ENCODE measurements at regions of chr2 and their contacts with region 1.

Region 1: GRCh38 chr2:30711646-30712085 is 95.6 kb downstream of the CAPN13 start:
- DNase-seq: peak; percentile 79 to 92 (median 87)
- ATAC-seq: peak; percentile 70 to 72
- H3K4me3 ChIP-seq: no peak overlapping the region
- H3K27ac ChIP-seq: no peak overlapping the region
- H3K4me1 ChIP-seq: no peaks in the 10 kb centered on the region
- H3K27me3 ChIP-seq: no peaks in the 10 kb centered on the region

Region 2: GRCh38 chr2:30178618-30179434 is 532.8 kb before region 1 on chr2:
- intact Hi-C with region 1: loop called in 1 of 4 experiments (anchors 10 kb)
- DNase-seq: peak in 2 of 3 donors; percentile 42 to 69
- ATAC-seq: peak; percentile 71 to 90
- H3K4me3 ChIP-seq: no peak overlapping the region
- H3K27ac ChIP-seq: peak overlapping the region; percentile 63
- H3K4me1 ChIP-seq: peaks cover 10% of the 10 kb centered on the region
- H3K27me3 ChIP-seq: no peaks in the 10 kb centered on the region

Region 3: GRCh38 chr2:30336978-30337841 is 374.5 kb before region 1 on chr2:
- intact Hi-C with region 1: loop called in 1 of 4 experiments (anchors 10 kb)
- DNase-seq: no peak
- ATAC-seq: no peak
- H3K4me3 ChIP-seq: no peak overlapping the region
- H3K27ac ChIP-seq: peak overlapping the region; percentile 7
- H3K4me1 ChIP-seq: peaks cover 13% of the 10 kb centered on the region
- H3K27me3 ChIP-seq: no peaks in the 10 kb centered on the region

Region 4: DNA sequence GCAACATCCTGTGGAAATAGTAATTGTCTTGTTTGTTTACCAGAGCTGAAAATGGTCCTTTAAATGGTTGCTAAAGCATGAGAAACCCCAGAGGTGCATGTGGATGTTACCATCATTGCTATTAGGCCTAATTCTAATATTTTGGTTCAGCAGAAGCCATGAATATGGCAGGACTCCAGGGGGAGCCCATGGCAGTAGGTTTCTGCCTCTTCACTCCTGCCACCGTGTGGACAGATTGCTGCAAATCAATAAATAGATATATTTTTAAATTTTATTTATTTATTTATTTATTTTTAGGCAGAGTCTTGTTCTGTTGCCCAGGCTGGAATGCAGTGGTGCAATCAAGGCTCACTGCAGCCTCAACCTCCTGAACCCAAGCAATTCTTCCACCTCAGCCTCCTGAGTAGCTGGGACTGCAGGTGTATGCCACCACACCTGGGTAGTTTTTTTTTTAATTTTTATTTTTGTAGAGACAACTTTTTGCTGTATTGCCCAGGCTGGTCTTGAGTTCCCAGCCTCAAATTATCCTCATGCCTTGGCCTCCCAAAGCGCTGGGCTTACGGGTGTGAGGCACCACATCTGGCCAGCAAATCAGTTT is 150.5 kb after region 1 on chr2:
- intact Hi-C with region 1: loop called in 1 of 4 experiments (anchors 10 kb)
- DNase-seq: peak; percentile 56 to 76 (median 67)
- ATAC-seq: no peak
- H3K4me3 ChIP-seq: no peak overlapping the region
- H3K27ac ChIP-seq: no peak overlapping the region
- H3K4me1 ChIP-seq: no peaks in the 10 kb centered on the region
- H3K27me3 ChIP-seq: no peaks in the 10 kb centered on the region

Region 5: DNA sequence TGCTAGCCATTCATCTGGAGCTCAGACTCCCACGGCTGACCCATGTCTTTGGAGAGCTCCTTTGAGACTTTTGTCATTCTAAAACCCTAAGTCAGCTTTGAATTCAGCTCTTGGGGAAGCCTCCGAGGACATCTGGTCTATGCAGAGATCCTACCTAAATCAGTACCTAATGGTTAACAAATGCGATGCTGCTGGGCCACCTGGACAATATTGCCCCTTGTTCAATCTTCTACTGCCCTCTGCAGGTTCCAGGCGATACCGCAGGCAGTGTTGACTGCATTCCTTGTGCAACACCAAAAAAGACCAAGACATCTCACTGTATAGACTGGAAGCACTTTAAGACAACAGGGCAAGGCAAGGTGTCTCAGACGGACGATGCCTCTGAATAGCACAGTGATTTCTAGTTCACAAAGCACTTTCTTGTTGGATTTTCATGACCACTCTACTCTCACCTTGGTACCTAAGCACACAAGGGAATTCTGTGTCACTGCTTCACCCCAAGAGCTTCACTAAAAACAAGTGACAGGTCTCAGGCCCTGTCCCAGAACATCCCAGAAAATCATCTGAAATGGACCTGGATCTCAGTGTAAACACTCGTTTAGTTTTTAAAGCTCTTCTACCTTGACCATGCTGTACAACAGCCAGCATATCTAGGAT is 622.0 kb after region 1 on chr2:
- intact Hi-C with region 1: loop called (anchors 2 to 10 kb)
- DNase-seq: peak; percentile 68 to 89 (median 82)
- ATAC-seq: peak; percentile 65 to 80
- H3K4me3 ChIP-seq: no peak overlapping the region
- H3K27ac ChIP-seq: no peak overlapping the region
- H3K4me1 ChIP-seq: no peaks in the 10 kb centered on the region
- H3K27me3 ChIP-seq: no peaks in the 10 kb centered on the region

Measured in right cardiac atrium (tissue), 5 donors.